A549 (cell line): ENCODE measurements at regions of chr1 and their contacts with region 1.

Region 1: GRCh38 chr1:93552741-93553455 is 105.0 kb downstream of the FNBP1L start:
- DNase-seq: no peak
- ATAC-seq: peak; percentile 26 to 27; a peak in 1 of 6 replicates
- H3K4me3 ChIP-seq: no peak overlapping the region
- H3K27ac ChIP-seq: no peak overlapping the region; a peak in 1 of 6 replicates
- H3K4me1 ChIP-seq: peaks cover 36% of the 10 kb centered on the region
- CTCF ChIP-seq: no peak
- EP300 ChIP-seq: no peak
- POLR2A ChIP-seq: no peak
- RAD21 ChIP-seq: no peak

Region 2: GRCh38 chr1:93542398-93542797 is 10.5 kb before region 1 on chr1:
- CTCF ChIA-PET with region 1: interaction called, 6 read pairs
- POLR2A ChIA-PET with region 1: interaction called, 12 read pairs
- DNase-seq: no peak
- ATAC-seq: no peak
- H3K4me3 ChIP-seq: no peak overlapping the region
- H3K27ac ChIP-seq: no peak overlapping the region
- H3K4me1 ChIP-seq: no peaks in the 10 kb centered on the region
- CTCF ChIP-seq: no peak
- EP300 ChIP-seq: no peak
- POLR2A ChIP-seq: no peak
- RAD21 ChIP-seq: no peak